ENCODE measurements at regions of chr11 and their contacts with region 1.

Region 1: DNA sequence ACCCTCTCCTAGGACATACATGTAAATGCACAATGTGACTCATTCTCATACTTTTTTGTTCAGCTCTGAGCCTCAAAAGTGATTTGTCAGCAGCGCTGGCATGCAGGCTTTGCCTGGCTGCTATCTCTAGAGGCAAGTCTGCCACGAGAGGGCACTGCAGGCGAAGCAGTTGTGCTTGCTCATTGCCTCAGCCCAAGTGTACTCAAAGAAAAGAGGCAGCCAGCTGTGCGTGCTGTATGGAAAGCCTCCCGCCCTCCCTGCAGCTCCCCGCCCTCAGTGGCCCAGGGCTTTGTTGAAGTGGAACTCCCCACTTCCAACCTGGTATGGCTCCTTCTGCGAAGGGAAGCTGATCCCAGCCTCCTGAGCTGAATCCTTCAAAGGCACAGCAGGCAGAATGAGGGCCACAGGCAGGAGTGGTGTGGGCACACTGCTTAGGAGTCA is 16.3 kb downstream of the SDHAF2 start:
- DNase-seq: peak; percentile 55
- ATAC-seq: peak; percentile 95
- H3K4me3 ChIP-seq: no peak overlapping the region
- H3K27ac ChIP-seq: peak overlapping the region; percentile 31; the same call in 1 of the 2 replicates
- H3K4me1 ChIP-seq: peaks cover 3% of the 10 kb centered on the region; the same call in 1 of the 2 replicates
- H3K27me3 ChIP-seq: no peaks in the 10 kb centered on the region
- CTCF ChIP-seq: peak; percentile 91

Region 2: DNA sequence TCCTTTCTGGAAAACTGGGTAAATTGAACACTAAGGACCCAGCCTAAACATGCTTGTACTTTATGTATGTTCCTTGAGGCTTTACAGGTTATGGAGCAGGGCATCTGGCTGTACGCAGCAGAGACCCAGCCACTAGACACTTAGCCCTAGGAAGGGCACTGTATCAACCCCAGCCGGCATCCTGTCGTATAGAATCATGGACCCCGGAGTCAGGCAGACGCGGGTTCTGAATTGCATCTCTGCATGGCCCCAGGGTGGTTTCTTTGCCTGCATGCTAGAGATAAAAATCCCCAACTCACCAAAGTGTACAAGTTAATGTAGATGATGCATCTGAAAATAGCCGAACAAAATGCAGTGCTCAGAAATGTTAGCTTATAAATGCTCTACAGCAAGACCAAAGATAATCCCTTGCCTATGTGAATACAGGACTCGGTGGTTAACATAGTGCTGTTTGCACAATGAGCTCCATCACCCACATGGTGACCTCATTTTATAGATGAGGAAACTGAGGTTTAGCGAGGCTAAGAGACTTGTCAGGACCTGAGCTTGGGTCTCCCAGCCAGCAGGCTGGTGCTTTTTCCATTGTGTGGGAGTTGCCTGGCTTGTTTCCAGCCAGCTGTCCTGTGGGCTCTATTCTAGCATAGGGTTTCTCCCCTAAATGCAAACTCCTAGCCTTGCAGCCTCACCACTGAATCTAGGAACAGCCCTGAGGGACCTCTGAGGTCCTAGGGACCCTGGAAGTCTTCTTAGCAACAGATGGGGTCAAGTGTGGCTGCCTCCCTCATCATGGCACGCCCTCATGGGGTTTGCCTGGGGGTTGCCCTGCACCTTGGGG is 467.5 kb before region 1 on chr11:
- CTCF ChIA-PET with region 1: no interaction called
- POLR2A ChIA-PET with region 1: interaction called, 13 read pairs
- in situ Hi-C with region 1: no loop called
- intact Hi-C with region 1: no loop called
- DNase-seq: no peak
- ATAC-seq: no peak
- H3K4me3 ChIP-seq: no peak overlapping the region
- H3K27ac ChIP-seq: no peak overlapping the region
- H3K4me1 ChIP-seq: no peaks in the 10 kb centered on the region
- H3K27me3 ChIP-seq: no peaks in the 10 kb centered on the region
- CTCF ChIP-seq: no peak

Region 3: GRCh38 chr11:61509043-61510029 is 63.1 kb after region 1 on chr11:
- CTCF ChIA-PET with region 1: interaction called, 6 read pairs
- POLR2A ChIA-PET with region 1: no interaction called
- in situ Hi-C with region 1: no loop called
- intact Hi-C with region 1: loop called (anchors 10 kb)
- DNase-seq: no peak
- ATAC-seq: peak; percentile 93
- H3K4me3 ChIP-seq: no peak overlapping the region
- H3K27ac ChIP-seq: no peak overlapping the region
- H3K4me1 ChIP-seq: no peaks in the 10 kb centered on the region
- H3K27me3 ChIP-seq: peaks cover 4% of the 10 kb centered on the region; the same call in 1 of the 2 replicates
- CTCF ChIP-seq: peak; percentile 85